ENCODE measurements at regions of chr2 and their contacts with region 1.

Region 1: DNA sequence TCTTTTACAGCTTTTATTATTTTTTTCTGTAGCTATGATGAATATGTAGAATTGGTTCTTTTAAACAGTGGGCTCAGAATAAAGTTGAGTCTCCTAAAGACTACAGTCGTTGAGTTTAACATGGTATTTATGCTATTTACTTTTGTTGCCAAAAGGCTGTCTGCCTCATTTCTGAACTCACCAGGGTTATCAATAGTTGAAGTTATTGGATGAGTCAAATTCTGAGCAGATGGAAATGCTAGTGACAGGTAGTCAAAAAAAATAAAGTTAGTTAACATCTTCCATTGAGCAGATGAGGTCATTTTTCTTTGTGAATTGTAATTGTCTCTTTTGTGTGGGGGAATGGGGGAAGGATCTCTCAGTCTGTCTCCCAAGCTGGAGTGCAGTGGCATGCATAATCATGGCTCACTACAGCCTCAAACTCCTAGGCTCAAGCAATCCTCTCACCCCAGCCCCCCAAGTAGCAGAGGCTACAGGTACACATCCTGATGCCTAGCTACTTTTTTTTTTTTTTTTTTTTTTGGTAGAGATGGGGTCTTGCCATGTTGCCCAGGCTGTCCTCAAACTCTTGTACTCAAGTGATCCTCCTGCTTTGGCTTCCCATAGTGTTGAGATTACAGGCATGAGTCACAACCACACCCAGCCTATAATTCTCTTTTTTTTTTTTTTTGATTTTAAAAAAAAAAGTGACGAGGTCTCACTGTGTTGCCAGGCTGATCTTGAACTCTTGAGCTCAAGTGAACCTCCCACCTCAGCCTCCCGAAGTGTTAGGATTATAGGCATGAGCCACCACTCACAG is 8.9 kb downstream of the PAPOLG start:
- DNase-seq: peak; percentile 10
- ATAC-seq: peak; percentile 53
- H3K4me3 ChIP-seq: no peak overlapping the region
- H3K27ac ChIP-seq: no peak overlapping the region
- H3K4me1 ChIP-seq: no peaks in the 10 kb centered on the region
- H3K27me3 ChIP-seq: no peaks in the 10 kb centered on the region
- CTCF ChIP-seq: no peak

Region 2: DNA sequence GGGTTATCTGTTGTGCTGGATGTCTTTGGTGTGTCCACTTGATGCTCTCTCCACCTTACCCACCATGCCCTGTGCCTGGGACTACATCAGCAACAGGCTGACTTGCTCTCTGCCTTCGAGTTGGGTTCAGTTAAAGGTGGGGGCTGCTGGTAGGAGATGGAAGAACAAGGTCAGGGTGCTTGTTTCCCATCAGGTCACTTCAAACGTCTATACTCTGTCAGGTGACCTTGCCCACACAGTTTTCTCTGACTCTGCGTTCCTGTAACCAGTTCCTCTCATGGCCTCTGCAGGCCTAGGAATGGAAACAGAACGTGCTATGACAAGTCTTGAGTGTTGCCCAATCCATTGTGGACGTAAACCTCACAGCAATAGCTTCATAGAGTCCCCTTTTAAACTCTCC is 47.2 kb before region 1 on chr2:
- CTCF ChIA-PET with region 1: no interaction called
- POLR2A ChIA-PET with region 1: interaction called, 17 read pairs
- intact Hi-C with region 1: no loop called
- DNase-seq: no peak
- ATAC-seq: no peak
- H3K4me3 ChIP-seq: no peak overlapping the region
- H3K27ac ChIP-seq: no peak overlapping the region
- H3K4me1 ChIP-seq: no peaks in the 10 kb centered on the region
- H3K27me3 ChIP-seq: no peaks in the 10 kb centered on the region
- CTCF ChIP-seq: no peak

Region 3: GRCh38 chr2:61016808-61017555 is 252.0 kb after region 1 on chr2:
- CTCF ChIA-PET with region 1: no interaction called
- POLR2A ChIA-PET with region 1: interaction called, 15 read pairs
- intact Hi-C with region 1: no loop called
- DNase-seq: peak; percentile 91
- ATAC-seq: peak; percentile 58
- H3K4me3 ChIP-seq: peak overlapping the region; percentile 95
- H3K27ac ChIP-seq: peak overlapping the region; percentile 97
- H3K4me1 ChIP-seq: peaks cover 38% of the 10 kb centered on the region
- H3K27me3 ChIP-seq: no peaks in the 10 kb centered on the region
- CTCF ChIP-seq: no peak

Region 4: DNA sequence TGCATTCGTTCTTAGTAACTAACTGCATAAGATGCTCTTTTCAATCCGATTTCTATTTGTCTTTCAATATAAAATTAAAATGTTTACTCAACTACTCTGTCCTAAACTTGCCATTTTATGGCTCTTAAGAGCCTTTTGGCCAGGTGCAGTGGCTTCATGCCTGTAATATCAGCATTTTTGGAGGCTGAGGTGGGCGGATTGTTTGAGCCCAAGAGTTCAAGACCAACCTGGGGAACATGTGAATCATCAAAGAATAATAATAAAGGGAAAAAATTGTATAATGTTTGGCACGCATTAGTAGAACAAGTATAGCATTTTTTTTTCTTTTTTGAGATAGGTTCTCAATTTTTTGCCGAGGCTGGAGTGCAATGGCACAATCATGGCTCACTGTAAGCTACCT is 489.6 kb after region 1 on chr2:
- CTCF ChIA-PET with region 1: no interaction called
- POLR2A ChIA-PET with region 1: interaction called, 10 read pairs
- intact Hi-C with region 1: no loop called
- DNase-seq: no peak
- ATAC-seq: no peak
- H3K4me3 ChIP-seq: no peak overlapping the region
- H3K27ac ChIP-seq: no peak overlapping the region
- H3K4me1 ChIP-seq: peaks cover 45% of the 10 kb centered on the region
- H3K27me3 ChIP-seq: no peaks in the 10 kb centered on the region
- CTCF ChIP-seq: no peak